ENCODE measurements at regions of chr19 and their contacts with region 1.

Region 1: GRCh38 chr19:44164673-44165512 is at the start of gene ZNF226:
- DNase-seq: peak; percentile 76 to 84 (median 82)
- H3K4me3 ChIP-seq: peak within 1 kb of the TSS; percentile 75 to 81
- H3K4me3 Mint-ChIP-seq: peak within 1 kb of the TSS; percentile 94 to 98 (median 98)
- H3K27ac ChIP-seq: peak within 1 kb of the TSS; percentile 68
- H3K27ac Mint-ChIP-seq: peak within 1 kb of the TSS; percentile 82 to 98 (median 96)
- H3K4me1 ChIP-seq: peaks cover 23% of the 10 kb centered on the region
- H3K4me1 Mint-ChIP-seq: peaks cover 21 to 34% (median 27%) of the 10 kb centered on the region in 4 donors
- H3K27me3 ChIP-seq: no peaks in the 10 kb centered on the region
- H3K27me3 Mint-ChIP-seq: peaks cover 0 to 1% of the 10 kb centered on the region in 2 donors
- total RNA-seq, gene ZNF226: 51.0 to 55.6 TPM

Region 2: GRCh38 chr19:44093931-44094765 is 70.7 kb before region 1 on chr19 and contains the start of gene ZNF224:
- CTCF ChIA-PET with region 1: no interaction called
- POLR2A ChIA-PET with region 1: interaction called, 18 read pairs
- intact Hi-C with region 1: loop called (anchors 1 kb)
- DNase-seq: peak; percentile 73 to 84 (median 76)
- H3K4me3 ChIP-seq: peak within 1 kb of the TSS; percentile 65 to 75
- H3K4me3 Mint-ChIP-seq: peak within 1 kb of the TSS; percentile 85 to 99 (median 98)
- H3K27ac ChIP-seq: peak within 1 kb of the TSS; percentile 69
- H3K27ac Mint-ChIP-seq: peak within 1 kb of the TSS; percentile 58 to 97 (median 90)
- H3K4me1 ChIP-seq: peaks cover 9% of the 10 kb centered on the region
- H3K4me1 Mint-ChIP-seq: peaks cover 9 to 33% (median 23%) of the 10 kb centered on the region in 4 donors
- H3K27me3 ChIP-seq: no peaks in the 10 kb centered on the region
- H3K27me3 Mint-ChIP-seq: no peaks in the 10 kb centered on the region
- total RNA-seq, gene ZNF224: 86.9 to 91.2 TPM

Region 3: GRCh38 chr19:44141191-44142058 is 23.5 kb before region 1 on chr19 and contains the start of gene ZNF234:
- CTCF ChIA-PET with region 1: no interaction called
- POLR2A ChIA-PET with region 1: interaction called, 20 read pairs
- intact Hi-C with region 1: loop called (anchors 1 kb)
- DNase-seq: peak; percentile 58 to 65 (median 64)
- H3K4me3 ChIP-seq: peak within 1 kb of the TSS; percentile 90 to 97
- H3K4me3 Mint-ChIP-seq: peak within 1 kb of the TSS; percentile 91 to 98 (median 95)
- H3K27ac ChIP-seq: peak within 1 kb of the TSS; percentile 48
- H3K27ac Mint-ChIP-seq: peak within 1 kb of the TSS; percentile 35 to 90 (median 89)
- H3K4me1 ChIP-seq: peaks cover 15% of the 10 kb centered on the region
- H3K4me1 Mint-ChIP-seq: peaks cover 7 to 32% (median 22%) of the 10 kb centered on the region in 4 donors
- H3K27me3 ChIP-seq: no peaks in the 10 kb centered on the region
- H3K27me3 Mint-ChIP-seq: no peaks in the 10 kb centered on the region
- total RNA-seq, gene ZNF234: 23.9 to 28.9 TPM

Region 4: DNA sequence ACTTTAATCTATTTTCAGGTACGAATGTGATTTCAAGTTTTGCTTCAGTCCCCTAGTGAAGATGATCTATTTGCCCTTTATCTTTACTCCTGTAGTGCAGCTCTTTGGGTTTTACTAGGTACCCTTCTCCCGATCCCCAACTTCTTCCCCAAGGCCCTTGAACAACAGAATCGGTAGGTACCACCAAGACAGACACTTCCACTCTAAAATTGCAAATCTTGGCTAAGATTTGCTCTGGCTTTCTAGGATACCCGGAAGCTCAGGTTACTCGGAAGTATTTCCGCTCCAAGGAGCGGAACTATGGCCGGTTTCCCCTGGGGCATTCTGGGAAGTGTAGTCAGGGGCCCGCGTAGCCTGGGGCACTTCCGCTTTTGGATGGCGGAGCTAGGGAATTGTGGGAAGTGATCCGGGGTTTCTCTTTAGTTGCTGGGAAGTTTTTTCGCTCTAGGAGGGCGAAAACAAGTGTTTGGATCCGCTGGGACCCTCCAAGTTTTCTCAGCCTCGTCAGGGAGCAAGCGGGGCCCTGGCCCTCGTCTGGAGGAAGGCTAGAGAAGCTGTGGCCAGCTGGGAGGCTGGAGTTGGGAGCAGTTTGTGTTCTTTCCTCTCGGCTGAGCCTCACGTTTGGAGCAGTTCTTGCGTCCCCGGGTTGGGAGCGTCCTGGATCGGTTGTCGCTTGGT is 42.4 kb after region 1 on chr19:
- CTCF ChIA-PET with region 1: interaction called, 3 read pairs
- POLR2A ChIA-PET with region 1: interaction called, 35 read pairs
- intact Hi-C with region 1: loop called (anchors 1 kb)
- DNase-seq: peak; percentile 61 to 77 (median 75)
- H3K4me3 ChIP-seq: peak overlapping the region; percentile 72 to 73
- H3K4me3 Mint-ChIP-seq: peak overlapping the region; percentile 89 to 95 (median 95)
- H3K27ac ChIP-seq: peak overlapping the region; percentile 60
- H3K27ac Mint-ChIP-seq: peak overlapping the region; percentile 61 to 95 (median 90)
- H3K4me1 ChIP-seq: peaks cover 5% of the 10 kb centered on the region
- H3K4me1 Mint-ChIP-seq: peaks cover 5 to 14% (median 10%) of the 10 kb centered on the region in 4 donors
- H3K27me3 ChIP-seq: no peaks in the 10 kb centered on the region
- H3K27me3 Mint-ChIP-seq: peaks cover 0 to 6% of the 10 kb centered on the region in 2 donors

Region 5: DNA sequence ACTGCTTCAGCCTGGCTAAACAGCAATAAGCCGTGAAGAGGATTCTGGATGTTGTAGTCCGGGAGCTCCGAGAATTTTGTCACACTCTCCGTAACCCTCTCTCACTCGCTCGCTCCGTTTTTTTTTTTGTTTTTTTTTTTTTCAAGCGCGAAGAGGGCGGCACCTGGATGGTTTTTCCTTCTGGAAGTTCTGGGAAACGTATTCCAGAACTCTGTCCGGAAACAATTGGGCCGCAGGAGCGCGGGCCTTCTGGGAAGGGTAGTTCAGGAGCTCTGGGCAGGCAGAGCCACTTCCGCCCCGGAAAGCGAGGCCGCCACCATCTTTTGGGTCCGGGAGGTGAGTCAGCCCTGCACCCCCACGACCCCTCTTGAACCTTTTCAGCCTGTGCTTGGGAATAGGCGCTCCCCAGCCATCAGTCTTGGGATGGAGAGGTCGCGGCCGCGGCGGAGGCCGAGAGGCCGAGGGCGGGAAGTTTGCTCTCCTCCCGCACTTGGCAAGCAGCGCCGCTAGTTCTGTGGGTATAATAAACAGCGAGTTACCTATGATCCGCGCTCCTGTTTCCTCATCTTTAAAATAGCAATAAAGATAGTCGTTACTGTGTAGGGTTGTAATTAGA is 47.5 kb after region 1 on chr19 and contains the start of gene ZNF227:
- CTCF ChIA-PET with region 1: interaction called, 3 read pairs
- POLR2A ChIA-PET with region 1: interaction called, 35 read pairs
- intact Hi-C with region 1: loop called (anchors 1 kb)
- DNase-seq: peak; percentile 73 to 86 (median 79)
- H3K4me3 ChIP-seq: peak within 1 kb of the TSS; percentile 52 to 93
- H3K4me3 Mint-ChIP-seq: peak within 1 kb of the TSS; percentile 96 to 99 (median 98)
- H3K27ac ChIP-seq: peak within 1 kb of the TSS; percentile 78
- H3K27ac Mint-ChIP-seq: peak within 1 kb of the TSS; percentile 85 to 99 (median 97)
- H3K4me1 ChIP-seq: peaks cover 17% of the 10 kb centered on the region
- H3K4me1 Mint-ChIP-seq: peaks cover 20 to 34% (median 23%) of the 10 kb centered on the region in 4 donors
- H3K27me3 ChIP-seq: no peaks in the 10 kb centered on the region
- H3K27me3 Mint-ChIP-seq: no peaks in the 10 kb centered on the region
- total RNA-seq, gene ZNF227: 51.6 to 54.4 TPM

Region 6: DNA sequence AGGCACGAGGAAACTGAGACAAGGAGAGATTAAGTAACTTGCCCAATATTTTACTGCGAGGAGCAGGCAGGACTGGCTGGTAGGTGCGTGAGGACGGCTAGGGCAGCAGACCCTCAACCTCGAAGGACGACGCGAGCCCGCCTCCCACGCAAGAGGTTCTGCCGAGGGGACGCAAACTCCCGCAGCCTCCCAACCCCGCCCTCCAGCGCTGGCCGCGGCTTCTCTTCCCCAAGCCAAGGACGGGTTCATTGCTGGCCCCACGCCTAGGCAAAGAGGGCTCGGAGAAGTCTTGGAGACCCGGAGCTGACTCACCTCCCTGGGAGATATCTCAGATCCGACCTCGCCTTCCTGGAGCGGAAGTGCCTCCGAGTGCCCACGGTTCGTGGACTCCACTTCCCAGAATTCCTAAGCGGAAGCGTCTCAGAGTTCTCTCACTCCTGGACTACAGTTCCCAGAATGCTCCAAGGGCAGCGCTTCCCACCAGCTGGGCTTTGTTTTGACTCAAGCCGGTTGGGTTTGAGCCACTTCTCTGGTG is 139.8 kb after region 1 on chr19 and contains the start of gene ZNF235:
- CTCF ChIA-PET with region 1: no interaction called
- POLR2A ChIA-PET with region 1: interaction called, 11 read pairs
- intact Hi-C with region 1: loop called (anchors 1 kb)
- DNase-seq: peak; percentile 62 to 72 (median 66)
- H3K4me3 ChIP-seq: peak within 1 kb of the TSS; percentile 74 to 85
- H3K4me3 Mint-ChIP-seq: peak within 1 kb of the TSS; percentile 89 to 95 (median 93)
- H3K27ac ChIP-seq: peak within 1 kb of the TSS; percentile 48
- H3K27ac Mint-ChIP-seq: peak within 1 kb of the TSS; percentile 35 to 90 (median 77)
- H3K4me1 ChIP-seq: peaks cover 13% of the 10 kb centered on the region
- H3K4me1 Mint-ChIP-seq: peaks cover 8 to 25% (median 15%) of the 10 kb centered on the region in 4 donors
- H3K27me3 ChIP-seq: no peaks in the 10 kb centered on the region
- H3K27me3 Mint-ChIP-seq: peaks cover 2 to 5% of the 10 kb centered on the region in 2 donors
- total RNA-seq, gene ZNF235: 13.0 to 15.9 TPM